ENCODE measurements at regions of chr11 and their contacts with region 1.

Region 1: GRCh38 chr11:64317957-64318693 is at the start of gene PRDX5:
- DNase-seq: peak; percentile 94
- ATAC-seq: peak; percentile 82
- H3K4me3 ChIP-seq: peak within 1 kb of the TSS; percentile 80 to 84
- H3K27ac ChIP-seq: peak within 1 kb of the TSS; percentile 83
- H3K4me1 ChIP-seq: peaks cover 22 to 63% of the 10 kb centered on the region in 2 experiments
- H3K27me3 ChIP-seq: no peaks in the 10 kb centered on the region
- CTCF ChIP-seq: peak in 2 of 3 experiments; percentile 28 to 38; a peak in 3 of 6 replicates
- POLR2A ChIP-seq: no peak
- RAD21 ChIP-seq: no peak
- total RNA-seq, gene PRDX5: 267 TPM

Region 2: DNA sequence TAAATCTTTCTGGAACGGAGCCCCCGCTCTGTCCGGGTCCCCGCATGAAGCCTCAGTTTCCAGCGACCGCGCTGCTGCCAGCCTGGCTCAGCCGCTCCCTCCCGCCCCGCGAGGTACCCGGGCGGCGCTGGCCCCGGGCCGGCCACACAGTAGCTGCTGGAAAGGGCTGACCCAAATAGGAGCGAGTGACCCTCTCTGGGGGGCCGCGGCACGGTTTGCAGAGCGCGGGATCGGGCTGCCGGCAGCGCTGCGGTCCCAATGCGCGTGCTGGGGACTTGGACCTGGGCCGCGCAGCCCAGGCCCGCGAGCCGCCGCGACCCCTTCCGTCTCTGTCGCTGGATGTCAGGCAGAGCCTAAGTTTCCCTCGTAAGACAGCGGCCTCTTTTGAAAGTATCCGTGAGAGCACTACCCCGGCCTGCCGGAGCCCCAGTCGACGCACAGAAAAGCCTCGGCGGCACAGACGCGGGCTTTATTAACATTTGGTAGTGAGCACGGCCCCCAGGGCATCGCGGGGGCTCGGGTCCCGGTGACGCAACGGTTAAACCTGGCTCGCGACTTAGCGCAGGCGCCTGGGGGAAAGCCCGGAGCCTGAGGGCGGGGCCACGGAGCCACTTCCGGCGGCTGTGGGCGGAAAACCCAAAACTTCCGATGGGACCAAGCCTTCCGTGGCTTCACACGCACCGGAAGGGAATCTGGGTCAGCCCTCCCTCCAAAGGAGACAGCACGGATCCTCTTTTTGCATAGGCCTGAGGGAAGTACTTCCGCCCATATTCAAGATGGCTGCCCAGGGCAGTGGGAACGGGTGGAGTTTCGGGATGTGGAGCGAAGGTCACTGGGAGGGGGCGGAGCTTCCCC is 48.5 kb before region 1 on chr11:
- CTCF ChIA-PET with region 1: interaction called, 4 read pairs
- POLR2A ChIA-PET with region 1: interaction called, 20 read pairs
- RAD21 ChIA-PET with region 1: interaction called in 1 of 2 experiments, 4 read pairs
- intact Hi-C with region 1: no loop called
- DNase-seq: peak; percentile 99
- ATAC-seq: peak; percentile 83
- H3K4me3 ChIP-seq: peak overlapping the region; percentile 72 to 98
- H3K27ac ChIP-seq: peak overlapping the region; percentile 95
- H3K4me1 ChIP-seq: peaks cover 18 to 31% of the 10 kb centered on the region in 2 experiments; a peak in 3 of 4 replicates
- H3K27me3 ChIP-seq: no peaks in the 10 kb centered on the region
- CTCF ChIP-seq: no peak
- POLR2A ChIP-seq: peak; percentile 14
- RAD21 ChIP-seq: no peak

Region 3: GRCh38 chr11:64331557-64332371 is 13.6 kb after region 1 on chr11:
- CTCF ChIA-PET with region 1: interaction called, 38 read pairs
- POLR2A ChIA-PET with region 1: interaction called, 77 read pairs
- RAD21 ChIA-PET with region 1: interaction called, 6 to 8 read pairs
- intact Hi-C with region 1: loop called (anchors 1 kb)
- DNase-seq: peak; percentile 83
- ATAC-seq: peak; percentile 74
- H3K4me3 ChIP-seq: peak overlapping the region; percentile 19 to 37
- H3K27ac ChIP-seq: peak overlapping the region; percentile 68
- H3K4me1 ChIP-seq: peaks cover 29 to 53% of the 10 kb centered on the region in 2 experiments
- H3K27me3 ChIP-seq: no peaks in the 10 kb centered on the region
- CTCF ChIP-seq: peak in 2 of 3 experiments; percentile 74 to 89; a peak in 4 of 6 replicates
- POLR2A ChIP-seq: peak; percentile 43
- RAD21 ChIP-seq: no peak

Region 4: DNA sequence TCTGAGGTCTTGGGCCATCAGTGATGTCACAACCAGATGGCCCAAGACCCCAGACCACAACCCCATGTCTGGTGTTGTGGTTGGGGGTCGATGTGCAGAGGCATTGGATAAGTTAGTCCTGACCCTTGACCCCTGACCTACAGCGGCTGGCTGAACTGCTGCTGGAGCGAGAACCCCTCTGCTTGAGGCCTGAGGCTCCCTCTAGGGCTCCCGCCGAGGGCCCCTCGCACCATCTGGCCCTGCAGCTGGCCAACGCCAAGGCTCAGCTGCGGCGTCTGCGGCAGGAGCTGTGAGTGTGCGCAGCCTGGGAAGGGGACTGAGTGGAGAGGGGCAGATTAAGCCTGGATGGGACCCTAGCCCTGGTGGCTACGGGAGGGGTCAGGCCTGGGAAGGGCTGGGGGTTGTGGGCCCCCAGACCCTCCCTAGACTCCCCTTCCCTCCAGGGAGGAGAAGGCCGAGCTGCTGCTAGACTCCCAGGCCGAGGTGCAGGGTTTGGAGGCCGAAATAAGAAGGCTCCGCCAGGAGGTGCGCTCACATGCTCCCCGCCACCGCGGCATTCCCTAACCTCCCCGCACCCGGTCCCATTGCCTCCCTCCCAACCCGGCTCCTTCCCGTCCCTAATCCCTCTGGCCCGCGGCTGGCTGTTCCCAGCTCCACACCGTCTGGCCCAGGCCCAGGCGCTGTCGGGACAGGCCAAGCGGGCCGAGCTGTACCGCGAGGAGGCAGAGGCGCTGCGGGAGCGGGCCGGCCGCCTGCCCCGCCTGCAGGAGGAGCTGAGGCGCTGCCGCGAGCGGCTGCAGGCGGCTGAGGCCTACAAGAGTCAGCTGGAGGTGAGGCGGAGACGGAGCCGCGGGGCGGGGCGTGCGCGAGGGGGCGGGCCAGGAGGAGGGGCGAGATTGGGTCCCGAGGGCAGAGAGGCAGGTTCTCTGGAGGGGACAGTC is 24.0 kb after region 1 on chr11:
- CTCF ChIA-PET with region 1: interaction called, 27 read pairs
- POLR2A ChIA-PET with region 1: interaction called, 16 read pairs
- RAD21 ChIA-PET with region 1: interaction called in 1 of 2 experiments, 6 read pairs
- intact Hi-C with region 1: no loop called
- DNase-seq: peak; percentile 80
- ATAC-seq: peak; percentile 92
- H3K4me3 ChIP-seq: peak overlapping the region; percentile 43 to 61
- H3K27ac ChIP-seq: peak overlapping the region; percentile 81
- H3K4me1 ChIP-seq: peaks cover 14 to 35% of the 10 kb centered on the region in 2 experiments
- H3K27me3 ChIP-seq: no peaks in the 10 kb centered on the region
- CTCF ChIP-seq: peak in 1 of 3 experiments; percentile 51; a peak in 3 of 6 replicates
- POLR2A ChIP-seq: peak; percentile 58
- RAD21 ChIP-seq: no peak

Measured in HCT116 (cell line).